Common myeloid progenitor, CD34-positive (primary cell): ENCODE measurements at regions of chr15 and their contacts with region 1.

Region 1: GRCh38 chr15:70569091-70569621 is 194.2 kb downstream of the UACA start:
- DNase-seq: peak; percentile 21 to 34 (median 33)
- H3K4me3 ChIP-seq: no peak overlapping the region
- H3K27ac ChIP-seq: no peak overlapping the region
- H3K4me1 ChIP-seq: peaks cover 0 to 24% (median 7%) of the 10 kb centered on the region in 4 experiments
- H3K27me3 ChIP-seq: no peaks in the 10 kb centered on the region

Region 2: GRCh38 chr15:70584838-70585706 is 15.9 kb after region 1 on chr15:
- CTCF ChIA-PET with region 1: interaction called, 28 read pairs
- POLR2A ChIA-PET with region 1: no interaction called
- DNase-seq: peak; percentile 47 to 69 (median 65)
- H3K4me3 ChIP-seq: peak overlapping the region in 3 of 7 experiments; percentile 0 to 54 (median 50)
- H3K27ac ChIP-seq: no peak overlapping the region
- H3K4me1 ChIP-seq: peaks cover 0 to 50% (median 23%) of the 10 kb centered on the region in 4 experiments
- H3K27me3 ChIP-seq: peaks cover 0 to 19% (median 2%) of the 10 kb centered on the region in 5 experiments